HepG2 (cell line): ENCODE measurements at regions of chr3 and their contacts with region 1.

Region 1: GRCh38 chr3:140898340-140899180 is 43.1 kb upstream of the SLC25A36 start:
- DNase-seq: peak; percentile 58
- ATAC-seq: peak; percentile 77
- H3K4me3 ChIP-seq: no peak overlapping the region
- H3K27ac ChIP-seq: no peak overlapping the region
- H3K4me1 ChIP-seq: no peaks in the 10 kb centered on the region
- H3K27me3 ChIP-seq: no peaks in the 10 kb centered on the region; a peak in 1 of 5 replicates
- CTCF ChIP-seq: peak; percentile 76
- EP300 ChIP-seq: no peak
- POLR2A ChIP-seq: no peak
- RAD21 ChIP-seq: 0 out of 2 replicates have a peak, but pooled peaks have one; percentile 13

Region 2: GRCh38 chr3:140972833-140973232 is 74.3 kb after region 1 on chr3:
- CTCF ChIA-PET with region 1: interaction called, 21 read pairs
- POLR2A ChIA-PET with region 1: no interaction called
- in situ Hi-C with region 1: no loop called
- intact Hi-C with region 1: loop called (anchors 1 kb)
- DNase-seq: peak; percentile 41
- ATAC-seq: peak; percentile 71
- H3K4me3 ChIP-seq: no peak overlapping the region
- H3K27ac ChIP-seq: no peak overlapping the region
- H3K4me1 ChIP-seq: peaks cover 12% of the 10 kb centered on the region; the same call in 1 of the 2 replicates
- H3K27me3 ChIP-seq: no peaks in the 10 kb centered on the region
- CTCF ChIP-seq: peak; percentile 34
- EP300 ChIP-seq: no peak
- POLR2A ChIP-seq: no peak
- RAD21 ChIP-seq: no peak